GM12878 (cell line): ENCODE measurements at regions of chr9 and their contacts with region 1.

Region 1: DNA sequence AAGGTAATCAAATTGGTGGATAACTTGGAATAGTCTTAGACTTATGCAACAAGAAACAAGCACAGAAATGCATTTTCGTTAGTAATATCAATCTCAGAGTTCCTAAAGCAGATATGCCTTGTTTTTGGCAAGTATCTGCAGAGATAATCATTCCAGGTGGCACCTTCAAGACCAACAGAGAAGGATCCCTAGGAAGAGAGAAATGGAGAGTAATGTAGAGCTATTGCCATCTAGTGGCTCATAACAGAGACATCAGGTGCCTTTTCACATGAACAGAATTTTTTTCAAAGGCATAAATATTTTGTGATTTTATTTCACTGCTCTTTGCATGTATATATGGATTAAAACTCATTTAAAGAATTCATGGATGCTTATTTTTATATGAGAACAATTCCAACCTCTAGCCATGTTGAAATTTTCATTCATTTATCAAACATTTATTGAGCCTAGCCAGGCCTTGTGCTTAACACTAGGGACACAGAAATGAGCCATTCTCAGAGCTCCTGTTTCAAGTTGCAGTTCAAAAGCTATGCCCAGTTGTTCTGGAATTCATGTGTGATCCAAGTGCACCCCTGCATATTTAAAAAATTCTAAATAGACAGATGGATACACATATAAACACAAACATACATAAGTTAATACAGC is 117.5 kb upstream of the OR13F1 start:
- DNase-seq: no peak
- ATAC-seq: peak; percentile 74
- H3K4me3 ChIP-seq: no peak overlapping the region
- H3K27ac ChIP-seq: no peak overlapping the region
- H3K4me1 ChIP-seq: no peaks in the 10 kb centered on the region
- H3K27me3 ChIP-seq: no peaks in the 10 kb centered on the region
- CTCF ChIP-seq: peak; percentile 55 to 66 (median 64); a peak in 5 of 6 replicates
- EP300 ChIP-seq: no peak
- POLR2A ChIP-seq: no peak
- RAD21 ChIP-seq: peak; percentile 76

Region 2: GRCh38 chr9:103203172-103203571 is 1183.4 kb before region 1 on chr9:
- CTCF ChIA-PET with region 1: no interaction called
- POLR2A ChIA-PET with region 1: no interaction called
- RAD21 ChIA-PET with region 1: no interaction called
- SMC1A ChIA-PET with region 1: no interaction called
- in situ Hi-C with region 1: no loop called
- intact Hi-C with region 1: no loop called
- DNase-seq: no peak
- ATAC-seq: peak; percentile 60
- H3K4me3 ChIP-seq: no peak overlapping the region
- H3K27ac ChIP-seq: no peak overlapping the region
- H3K4me1 ChIP-seq: no peaks in the 10 kb centered on the region
- H3K27me3 ChIP-seq: no peaks in the 10 kb centered on the region
- CTCF ChIP-seq: no peak
- EP300 ChIP-seq: no peak
- POLR2A ChIP-seq: no peak
- RAD21 ChIP-seq: no peak

Region 3: GRCh38 chr9:103397868-103398600 is 988.5 kb before region 1 on chr9:
- CTCF ChIA-PET with region 1: interaction called, 12 read pairs
- POLR2A ChIA-PET with region 1: no interaction called
- RAD21 ChIA-PET with region 1: no interaction called
- SMC1A ChIA-PET with region 1: no interaction called
- in situ Hi-C with region 1: loop called (anchors 25 kb)
- intact Hi-C with region 1: loop called (anchors 2 kb)
- DNase-seq: no peak
- ATAC-seq: peak; percentile 88
- H3K4me3 ChIP-seq: no peak overlapping the region
- H3K27ac ChIP-seq: no peak overlapping the region
- H3K4me1 ChIP-seq: no peaks in the 10 kb centered on the region
- H3K27me3 ChIP-seq: no peaks in the 10 kb centered on the region
- CTCF ChIP-seq: peak; percentile 71 to 72 (median 71); a peak in 5 of 6 replicates
- EP300 ChIP-seq: no peak
- POLR2A ChIP-seq: no peak
- RAD21 ChIP-seq: peak; percentile 64

Region 4: GRCh38 chr9:103789686-103790085 is 596.9 kb before region 1 on chr9:
- CTCF ChIA-PET with region 1: interaction called, 3 read pairs
- POLR2A ChIA-PET with region 1: no interaction called
- RAD21 ChIA-PET with region 1: interaction called, 5 read pairs
- SMC1A ChIA-PET with region 1: interaction called, 4 read pairs
- in situ Hi-C with region 1: no loop called
- intact Hi-C with region 1: loop called (anchors 10 kb)
- DNase-seq: no peak
- ATAC-seq: peak; percentile 87
- H3K4me3 ChIP-seq: no peak overlapping the region
- H3K27ac ChIP-seq: no peak overlapping the region
- H3K4me1 ChIP-seq: no peaks in the 10 kb centered on the region
- H3K27me3 ChIP-seq: no peaks in the 10 kb centered on the region
- CTCF ChIP-seq: peak; percentile 44 to 49 (median 44); a peak in 5 of 6 replicates
- EP300 ChIP-seq: no peak
- POLR2A ChIP-seq: no peak
- RAD21 ChIP-seq: peak; percentile 76

Region 5: DNA sequence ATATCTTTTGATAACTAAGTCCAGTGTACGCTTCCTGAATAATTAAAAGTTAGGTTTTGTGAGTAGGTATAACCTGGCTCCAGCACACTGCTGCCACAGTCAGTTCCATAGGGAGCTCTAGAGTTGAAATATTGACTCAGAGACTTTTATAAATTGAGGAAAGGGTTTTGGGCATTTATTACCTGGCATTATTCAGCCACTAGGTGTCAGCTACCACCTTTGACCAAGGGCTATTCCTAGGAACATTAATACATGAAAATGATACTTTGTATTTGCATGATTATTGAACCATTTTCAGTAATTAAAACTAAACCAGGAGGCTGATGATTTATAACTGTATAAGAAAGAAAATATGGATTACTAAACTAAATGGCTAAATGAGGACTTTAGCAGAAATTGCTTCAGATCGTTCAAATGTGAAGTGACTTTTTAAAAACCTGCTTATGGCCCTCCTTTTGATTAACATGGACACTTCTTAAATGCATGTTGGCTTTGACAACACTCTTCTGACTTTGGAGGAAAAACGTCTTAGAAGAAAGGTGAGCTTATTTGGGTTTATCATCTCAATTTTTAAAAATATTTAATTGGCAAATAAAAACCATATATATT is 209.4 kb before region 1 on chr9:
- CTCF ChIA-PET with region 1: interaction called, 48 read pairs
- POLR2A ChIA-PET with region 1: no interaction called
- RAD21 ChIA-PET with region 1: interaction called, 18 read pairs
- SMC1A ChIA-PET with region 1: interaction called, 38 read pairs
- in situ Hi-C with region 1: loop called (anchors 10 kb)
- intact Hi-C with region 1: loop called (anchors 1 kb)
- DNase-seq: no peak
- ATAC-seq: peak; percentile 87
- H3K4me3 ChIP-seq: no peak overlapping the region
- H3K27ac ChIP-seq: no peak overlapping the region
- H3K4me1 ChIP-seq: 0 out of 2 replicates have a peak, but pooled peaks cover 2% of the 10 kb centered on the region
- H3K27me3 ChIP-seq: no peaks in the 10 kb centered on the region
- CTCF ChIP-seq: peak; percentile 36 to 51 (median 41); a peak in 4 of 6 replicates
- EP300 ChIP-seq: no peak
- POLR2A ChIP-seq: no peak
- RAD21 ChIP-seq: peak; percentile 51

Region 6: GRCh38 chr9:104417296-104417695 is 30.7 kb after region 1 on chr9:
- CTCF ChIA-PET with region 1: no interaction called
- POLR2A ChIA-PET with region 1: no interaction called
- RAD21 ChIA-PET with region 1: no interaction called
- SMC1A ChIA-PET with region 1: no interaction called
- in situ Hi-C with region 1: no loop called
- intact Hi-C with region 1: no loop called
- DNase-seq: no peak
- ATAC-seq: no peak
- H3K4me3 ChIP-seq: no peak overlapping the region
- H3K27ac ChIP-seq: no peak overlapping the region
- H3K4me1 ChIP-seq: no peaks in the 10 kb centered on the region
- H3K27me3 ChIP-seq: no peaks in the 10 kb centered on the region
- CTCF ChIP-seq: no peak
- EP300 ChIP-seq: no peak
- POLR2A ChIP-seq: no peak
- RAD21 ChIP-seq: no peak